Activated CD4-positive, alpha-beta T cell treated with anti-CD3 and anti-CD28 coated beads, Interleukin-2, amount 10 ng/mL, durations not matched to agents 24 days and 14 days (primary cell): ENCODE measurements at regions of chr18 and their contacts with region 1.

Region 1: GRCh38 chr18:35497370-35498197 is at the start of gene INO80C:
- DNase-seq: peak; percentile 98
- H3K4me3 Mint-ChIP-seq: peak within 1 kb of the TSS; percentile 95
- H3K27ac Mint-ChIP-seq: peak within 1 kb of the TSS; percentile 99
- H3K4me1 Mint-ChIP-seq: peaks cover 32% of the 10 kb centered on the region
- H3K27me3 Mint-ChIP-seq: peaks cover 3% of the 10 kb centered on the region
- total RNA-seq, gene INO80C: 34.7 and 37.6 TPM in 2 replicates

Region 2: DNA sequence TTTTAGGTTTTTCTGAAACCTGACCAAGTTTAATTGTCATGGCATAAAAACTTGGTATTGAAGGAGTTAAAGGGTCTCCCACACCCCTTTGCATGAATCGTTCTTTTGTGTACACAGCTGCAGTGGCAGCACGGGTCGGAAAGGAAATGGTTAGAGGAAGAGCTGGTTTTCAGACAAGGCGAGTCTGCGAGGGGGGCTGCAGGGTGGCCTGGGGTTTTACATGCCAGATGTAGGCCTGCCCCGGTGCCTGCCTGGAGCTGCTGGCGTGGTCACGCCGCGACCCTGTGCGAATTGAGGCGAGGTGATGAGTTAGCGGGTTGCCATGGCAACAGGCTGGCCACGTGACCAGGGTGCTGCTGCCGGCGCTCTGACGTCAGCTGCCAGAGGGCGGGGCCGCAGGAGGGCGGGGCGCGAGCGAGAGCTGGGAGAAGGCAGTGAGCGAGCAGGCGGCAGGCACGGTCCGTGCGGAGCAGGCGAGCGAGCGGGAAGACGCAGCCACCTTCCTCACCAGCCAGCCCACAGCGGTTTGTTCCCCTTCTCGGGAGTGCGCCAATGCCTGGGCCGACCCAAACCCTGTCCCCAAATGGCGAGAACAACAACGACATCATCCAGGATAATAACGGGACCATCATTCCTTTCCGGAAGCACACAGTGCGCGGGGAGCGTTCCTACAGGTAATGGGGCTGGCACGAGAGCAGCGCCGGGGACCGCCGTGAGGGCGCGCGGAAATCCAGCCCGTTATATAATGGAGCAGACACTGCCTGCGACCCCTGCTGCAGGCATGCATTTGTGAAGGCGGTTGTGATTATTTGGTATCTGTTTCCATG is 456.4 kb before region 1 on chr18 and contains the start of gene MAPRE2:
- intact Hi-C with region 1: loop called (anchors 5 kb)
- DNase-seq: peak; percentile 100
- H3K4me3 Mint-ChIP-seq: peak within 1 kb of the TSS; percentile 98
- H3K27ac Mint-ChIP-seq: peak within 1 kb of the TSS; percentile 98
- H3K4me1 Mint-ChIP-seq: peaks cover 54% of the 10 kb centered on the region
- H3K27me3 Mint-ChIP-seq: no peaks in the 10 kb centered on the region
- total RNA-seq, gene MAPRE2: 46.8 and 52.5 TPM in 2 replicates

Region 3: GRCh38 chr18:35386600-35387351 is 110.8 kb before region 1 on chr18:
- intact Hi-C with region 1: loop called (anchors 5 kb)
- DNase-seq: peak; percentile 89
- H3K4me3 Mint-ChIP-seq: no peak overlapping the region
- H3K27ac Mint-ChIP-seq: no peak overlapping the region
- H3K4me1 Mint-ChIP-seq: peaks cover 5% of the 10 kb centered on the region
- H3K27me3 Mint-ChIP-seq: peaks cover 33% of the 10 kb centered on the region

Region 4: DNA sequence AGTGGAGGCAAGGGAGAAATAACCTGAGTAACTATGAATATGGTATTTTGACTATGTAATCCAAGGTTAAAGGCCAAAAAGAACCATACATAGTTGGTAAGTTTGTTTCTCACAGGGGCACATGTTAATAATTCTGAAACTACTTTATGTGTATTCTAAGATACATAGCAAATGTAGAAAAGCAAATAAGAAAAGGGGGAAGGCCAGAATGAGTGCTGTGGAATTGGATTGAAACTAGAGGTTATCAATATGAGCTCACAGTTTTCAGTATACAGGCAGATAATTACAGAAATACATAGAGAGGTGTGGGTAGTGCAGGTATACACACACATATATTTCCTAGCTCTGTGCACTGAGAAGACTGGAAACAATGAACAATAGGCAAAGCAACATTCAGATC is 13.6 kb before region 1 on chr18:
- intact Hi-C with region 1: loop called (anchors 1 kb)
- DNase-seq: no peak
- H3K4me3 Mint-ChIP-seq: no peak overlapping the region
- H3K27ac Mint-ChIP-seq: peak overlapping the region; percentile 16
- H3K4me1 Mint-ChIP-seq: peaks cover 16% of the 10 kb centered on the region
- H3K27me3 Mint-ChIP-seq: no peaks in the 10 kb centered on the region

Region 5: DNA sequence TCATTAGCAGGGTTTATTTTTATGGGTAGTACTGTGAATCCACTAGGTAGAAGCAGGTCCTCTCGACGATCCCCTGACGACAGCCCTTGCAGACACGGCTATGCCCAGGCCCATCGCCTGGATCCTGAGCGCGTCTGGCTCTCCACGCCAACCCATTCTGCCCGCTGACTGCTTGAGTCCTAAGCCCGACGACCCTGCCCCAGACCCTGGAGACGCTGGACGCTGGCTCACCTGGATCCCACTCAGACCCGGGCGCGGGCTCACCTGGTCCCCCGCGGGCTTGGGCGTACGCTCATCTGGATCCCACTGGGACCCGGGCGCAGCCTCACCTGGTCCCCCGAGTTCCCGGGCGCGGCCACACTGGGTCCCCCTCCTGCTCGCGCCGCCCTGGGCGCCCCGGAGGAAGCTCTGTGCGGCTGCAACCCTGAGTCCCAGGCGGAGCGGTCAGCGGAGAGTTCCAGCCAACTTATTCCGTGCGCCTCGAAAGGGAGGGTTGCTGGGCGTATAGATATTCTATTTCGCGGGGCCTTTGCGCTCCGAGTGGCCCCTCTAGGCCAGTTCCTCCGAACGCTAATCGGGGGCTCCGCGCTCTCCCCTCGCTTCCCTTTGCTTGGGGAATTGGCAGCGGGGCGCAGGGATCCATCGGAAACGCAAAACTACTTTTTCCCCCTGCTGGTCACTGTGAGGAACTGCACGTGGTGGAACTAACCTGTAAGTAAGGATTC is 452.5 kb after region 1 on chr18:
- intact Hi-C with region 1: no loop called
- DNase-seq: peak; percentile 88
- H3K4me3 Mint-ChIP-seq: peak overlapping the region; percentile 86
- H3K27ac Mint-ChIP-seq: no peak overlapping the region
- H3K4me1 Mint-ChIP-seq: peaks cover 4% of the 10 kb centered on the region
- H3K27me3 Mint-ChIP-seq: peaks cover 18% of the 10 kb centered on the region

Region 6: GRCh38 chr18:35972197-35973052 is 474.8 kb after region 1 on chr18 and contains the start of gene RMP24:
- intact Hi-C with region 1: loop called (anchors 1 kb)
- DNase-seq: peak; percentile 97
- H3K4me3 Mint-ChIP-seq: peak within 1 kb of the TSS; percentile 99
- H3K27ac Mint-ChIP-seq: peak within 1 kb of the TSS; percentile 92
- H3K4me1 Mint-ChIP-seq: peaks cover 43% of the 10 kb centered on the region
- H3K27me3 Mint-ChIP-seq: no peaks in the 10 kb centered on the region